ENCODE measurements at regions of chr5 and their contacts with region 1.

Region 1: GRCh38 chr5:132238169-132238744 is 10.6 kb upstream of the P4HA2 start:
- DNase-seq: peak; percentile 16 to 75 (median 60)
- ATAC-seq: peak; percentile 63 to 67 (median 64)
- H3K4me3 ChIP-seq: no peak overlapping the region
- H3K4me3 Mint-ChIP-seq: no peak overlapping the region
- H3K27ac ChIP-seq: no peak overlapping the region
- H3K27ac Mint-ChIP-seq: no peak overlapping the region
- H3K4me1 ChIP-seq: no peaks in the 10 kb centered on the region
- H3K4me1 Mint-ChIP-seq: no peaks in the 10 kb centered on the region
- H3K27me3 ChIP-seq: peaks cover 0 to 3% of the 10 kb centered on the region in 2 experiments
- H3K27me3 Mint-ChIP-seq: peaks cover 3 to 9% of the 10 kb centered on the region in 2 donors

Region 2: GRCh38 chr5:132389453-132390286 is 151.4 kb after region 1 on chr5:
- CTCF ChIA-PET with region 1: no interaction called
- POLR2A ChIA-PET with region 1: no interaction called
- DNase-seq: no peak
- ATAC-seq: peak in 2 of 4 experiments; percentile 33 to 38
- H3K4me3 ChIP-seq: no peak overlapping the region
- H3K4me3 Mint-ChIP-seq: no peak overlapping the region
- H3K27ac ChIP-seq: no peak overlapping the region
- H3K27ac Mint-ChIP-seq: peak overlapping the region; percentile 17 to 59
- H3K4me1 ChIP-seq: peaks cover 3 to 28% of the 10 kb centered on the region in 2 experiments
- H3K4me1 Mint-ChIP-seq: peaks cover 50 to 85% (median 56%) of the 10 kb centered on the region in 3 donors
- H3K27me3 ChIP-seq: no peaks in the 10 kb centered on the region
- H3K27me3 Mint-ChIP-seq: no peaks in the 10 kb centered on the region

Region 3: DNA sequence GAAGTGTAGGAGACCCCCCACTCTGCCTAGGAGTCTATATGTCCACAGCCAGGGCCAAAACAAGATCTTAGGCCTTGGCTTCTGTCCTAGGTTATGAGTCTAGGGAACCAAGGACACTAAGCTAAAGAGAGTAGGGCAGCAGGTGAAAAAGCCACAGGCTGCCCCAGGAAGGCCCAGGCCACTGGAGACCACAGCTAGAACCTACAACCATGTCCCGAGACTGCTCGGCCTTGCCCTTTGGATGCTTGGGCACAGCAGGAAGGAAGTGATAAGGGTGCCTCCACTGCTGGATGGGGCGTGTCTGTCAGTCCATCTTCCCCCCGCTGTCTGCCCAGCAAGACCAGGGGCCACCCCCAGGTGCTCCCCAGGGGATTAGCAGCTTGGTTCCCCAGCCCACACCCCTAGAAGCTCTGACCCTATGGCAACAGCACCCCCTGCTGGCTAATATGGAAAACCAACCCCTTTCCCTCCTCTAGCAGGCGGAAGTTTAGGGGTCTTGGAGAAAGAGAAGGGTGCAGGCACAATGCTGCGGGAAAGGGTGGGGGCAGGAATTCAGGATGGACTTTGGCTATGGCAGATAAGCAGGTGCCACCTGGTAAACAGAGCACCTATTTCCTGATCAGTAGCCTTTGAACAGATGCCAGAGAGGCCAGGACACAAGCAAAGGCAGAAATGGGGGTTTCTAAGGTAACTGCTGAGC is 262.8 kb after region 1 on chr5:
- CTCF ChIA-PET with region 1: interaction called, 6 to 10 read pairs
- POLR2A ChIA-PET with region 1: no interaction called
- DNase-seq: peak in 34 of 35 experiments; percentile 51 to 91 (median 70)
- ATAC-seq: peak; percentile 23 to 45 (median 30)
- H3K4me3 ChIP-seq: no peak overlapping the region
- H3K4me3 Mint-ChIP-seq: no peak overlapping the region
- H3K27ac ChIP-seq: peak overlapping the region; percentile 92
- H3K27ac Mint-ChIP-seq: peak overlapping the region; percentile 77 to 99
- H3K4me1 ChIP-seq: peaks cover 0 to 47% of the 10 kb centered on the region in 2 experiments
- H3K4me1 Mint-ChIP-seq: peaks cover 30 to 39% (median 37%) of the 10 kb centered on the region in 3 donors
- H3K27me3 ChIP-seq: no peaks in the 10 kb centered on the region
- H3K27me3 Mint-ChIP-seq: peaks cover 0 to 3% of the 10 kb centered on the region in 2 donors